ENCODE measurements at regions of chr3 and their contacts with region 1.

Region 1: GRCh38 chr3:105674437-105675065 is 194.3 kb downstream of the CBLB start:
- DNase-seq: no peak
- ATAC-seq: no peak
- H3K4me3 ChIP-seq: no peak overlapping the region
- H3K4me3 Mint-ChIP-seq: no peak overlapping the region
- H3K27ac ChIP-seq: peak overlapping the region in 1 of 2 experiments; percentile 2
- H3K27ac Mint-ChIP-seq: peak overlapping the region; percentile 34
- H3K4me1 ChIP-seq: no peaks in the 10 kb centered on the region
- H3K4me1 Mint-ChIP-seq: peaks cover 9% of the 10 kb centered on the region
- H3K27me3 ChIP-seq: no peaks in the 10 kb centered on the region
- H3K27me3 Mint-ChIP-seq: no peaks in the 10 kb centered on the region
- CTCF ChIP-seq: no peak

Region 2: DNA sequence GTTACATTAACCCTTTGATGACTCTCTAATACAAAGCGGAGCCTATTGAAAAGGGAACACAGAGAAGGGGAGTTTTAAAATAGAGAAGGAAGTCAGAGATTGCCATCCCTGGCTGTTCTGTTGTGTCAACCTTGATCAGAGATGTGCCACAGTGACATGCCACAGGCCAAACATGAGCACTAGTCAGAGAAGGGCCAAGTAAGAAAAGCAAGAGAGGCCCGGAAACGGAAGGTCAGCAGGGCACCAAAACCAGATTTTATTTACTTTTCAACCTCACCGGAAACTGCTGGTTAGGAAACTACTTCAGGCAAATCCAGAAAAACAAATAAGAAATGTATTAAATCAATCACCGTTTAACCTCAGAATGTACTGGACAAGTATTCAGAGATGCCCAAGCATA is 136.1 kb before region 1 on chr3:
- CTCF ChIA-PET with region 1: no interaction called
- POLR2A ChIA-PET with region 1: no interaction called
- intact Hi-C with region 1: no loop called
- DNase-seq: no peak
- ATAC-seq: no peak
- H3K4me3 ChIP-seq: no peak overlapping the region
- H3K4me3 Mint-ChIP-seq: no peak overlapping the region
- H3K27ac ChIP-seq: no peak overlapping the region
- H3K27ac Mint-ChIP-seq: no peak overlapping the region
- H3K4me1 ChIP-seq: no peaks in the 10 kb centered on the region
- H3K4me1 Mint-ChIP-seq: no peaks in the 10 kb centered on the region
- H3K27me3 ChIP-seq: no peaks in the 10 kb centered on the region
- H3K27me3 Mint-ChIP-seq: no peaks in the 10 kb centered on the region
- CTCF ChIP-seq: no peak

Region 3: GRCh38 chr3:106083207-106083606 is 408.7 kb after region 1 on chr3:
- CTCF ChIA-PET with region 1: no interaction called
- POLR2A ChIA-PET with region 1: no interaction called
- intact Hi-C with region 1: loop called in 1 of 2 experiments (anchors 5 kb)
- DNase-seq: no peak
- ATAC-seq: no peak
- H3K4me3 ChIP-seq: no peak overlapping the region
- H3K4me3 Mint-ChIP-seq: no peak overlapping the region
- H3K27ac ChIP-seq: no peak overlapping the region
- H3K27ac Mint-ChIP-seq: no peak overlapping the region
- H3K4me1 ChIP-seq: no peaks in the 10 kb centered on the region
- H3K4me1 Mint-ChIP-seq: peaks cover 6% of the 10 kb centered on the region
- H3K27me3 ChIP-seq: no peaks in the 10 kb centered on the region
- H3K27me3 Mint-ChIP-seq: no peaks in the 10 kb centered on the region
- CTCF ChIP-seq: no peak

Measured in CD8-positive, alpha-beta T cell (primary cell).